IMR-90 (cell line): ENCODE measurements at regions of chr12 and their contacts with region 1.

Region 1: GRCh38 chr12:74424778-74425177 is 112.9 kb upstream of the ATXN7L3B start:
- DNase-seq: no peak
- ATAC-seq: no peak
- H3K4me3 ChIP-seq: no peak overlapping the region
- H3K27ac ChIP-seq: no peak overlapping the region
- H3K4me1 ChIP-seq: no peaks in the 10 kb centered on the region
- H3K27me3 ChIP-seq: no peaks in the 10 kb centered on the region
- CTCF ChIP-seq: no peak
- POLR2A ChIP-seq: no peak
- RAD21 ChIP-seq: no peak

Region 2: GRCh38 chr12:73136386-73136785 is 1288.4 kb before region 1 on chr12:
- CTCF ChIA-PET with region 1: no interaction called
- POLR2A ChIA-PET with region 1: no interaction called
- dilution Hi-C with region 1: no loop called
- in situ Hi-C with region 1: no loop called
- intact Hi-C with region 1: loop called (anchors 5 kb)
- DNase-seq: no peak
- ATAC-seq: no peak
- H3K4me3 ChIP-seq: no peak overlapping the region
- H3K27ac ChIP-seq: no peak overlapping the region
- H3K4me1 ChIP-seq: no peaks in the 10 kb centered on the region
- H3K27me3 ChIP-seq: no peaks in the 10 kb centered on the region
- CTCF ChIP-seq: no peak
- POLR2A ChIP-seq: no peak
- RAD21 ChIP-seq: no peak

Region 3: DNA sequence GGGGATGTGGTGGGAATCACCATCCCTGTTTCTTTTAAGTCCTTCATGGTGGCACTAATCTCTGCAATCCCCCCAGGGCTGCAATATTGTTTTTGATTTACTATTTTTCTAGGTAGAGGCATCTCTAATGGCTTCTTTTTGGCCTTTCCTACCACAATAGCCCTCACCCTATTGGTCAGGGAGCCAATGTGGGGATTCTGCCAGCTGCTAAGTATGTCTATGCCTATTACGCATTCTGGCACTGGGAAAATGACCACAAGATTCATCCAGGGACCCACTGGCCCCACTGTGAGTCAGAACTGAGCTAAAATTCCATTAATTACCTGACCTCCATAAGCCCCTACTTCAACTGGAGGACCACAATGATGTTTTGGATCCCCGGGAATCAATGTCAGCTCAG is 950.2 kb after region 1 on chr12:
- CTCF ChIA-PET with region 1: no interaction called
- POLR2A ChIA-PET with region 1: no interaction called
- dilution Hi-C with region 1: no loop called
- in situ Hi-C with region 1: no loop called
- intact Hi-C with region 1: no loop called
- DNase-seq: no peak
- ATAC-seq: no peak
- H3K4me3 ChIP-seq: no peak overlapping the region
- H3K27ac ChIP-seq: no peak overlapping the region
- H3K4me1 ChIP-seq: peaks cover 8% of the 10 kb centered on the region
- H3K27me3 ChIP-seq: no peaks in the 10 kb centered on the region
- CTCF ChIP-seq: no peak
- POLR2A ChIP-seq: no peak
- RAD21 ChIP-seq: no peak